Heart right ventricle (tissue), 16 donors: ENCODE measurements at regions of chr11 and their contacts with region 1.

Region 1: GRCh38 chr11:17116121-17116520 is 38.7 kb upstream of the RPS13 start:
- DNase-seq: no peak
- ATAC-seq: no peak
- H3K4me3 ChIP-seq: no peak overlapping the region
- H3K27ac ChIP-seq: no peak overlapping the region
- H3K4me1 ChIP-seq: no peaks in the 10 kb centered on the region
- H3K27me3 ChIP-seq: no peaks in the 10 kb centered on the region
- CTCF ChIP-seq: no peak

Region 2: GRCh38 chr11:17171916-17172315 is 55.8 kb after region 1 on chr11:
- intact Hi-C with region 1: loop called in 1 of 10 experiments (anchors 10 kb)
- DNase-seq: no peak
- ATAC-seq: peak in 1 of 8 donors; percentile 53
- H3K4me3 ChIP-seq: no peak overlapping the region
- H3K27ac ChIP-seq: no peak overlapping the region
- H3K4me1 ChIP-seq: peaks cover 0 to 22% (median 5%) of the 10 kb centered on the region in 9 donors
- H3K27me3 ChIP-seq: no peaks in the 10 kb centered on the region
- CTCF ChIP-seq: no peak

Region 3: DNA sequence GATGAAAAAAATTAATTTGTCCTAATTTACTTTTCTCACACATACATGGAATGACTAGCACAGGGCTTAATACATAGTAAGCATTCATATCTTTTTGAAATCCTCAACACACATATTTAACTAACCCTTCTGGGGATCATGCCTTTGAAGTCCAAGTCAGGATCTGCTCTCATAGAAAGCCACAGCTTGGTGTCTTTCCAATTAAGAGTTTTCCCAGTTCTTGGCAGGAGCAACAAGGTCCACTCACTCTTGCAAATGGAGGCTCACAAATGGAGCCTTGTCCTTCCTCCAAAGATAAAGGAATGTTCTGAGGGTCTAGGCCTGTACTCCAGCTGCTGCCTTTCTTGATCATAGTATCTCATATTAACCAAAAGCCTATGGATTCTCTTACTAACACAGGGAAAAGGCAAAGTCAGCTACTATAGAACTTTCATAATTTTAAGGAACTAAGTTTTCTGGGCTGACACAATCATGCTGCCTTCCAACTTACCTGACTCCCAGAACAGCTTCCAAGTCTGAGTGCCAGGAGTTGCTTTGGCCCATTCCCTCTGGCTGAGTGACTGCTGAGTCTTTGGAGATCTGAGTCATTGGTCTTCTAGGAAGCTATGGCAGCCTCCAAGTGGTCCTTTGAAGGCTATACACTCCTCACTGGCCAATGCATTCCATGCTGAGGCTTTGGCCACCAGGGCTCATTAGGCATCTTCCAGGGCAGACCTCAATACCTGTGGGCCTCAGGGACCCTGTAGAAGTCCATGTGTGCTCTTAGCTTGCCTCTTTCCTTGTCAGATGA is 134.6 kb after region 1 on chr11:
- intact Hi-C with region 1: no loop called
- DNase-seq: no peak
- ATAC-seq: no peak
- H3K4me3 ChIP-seq: no peak overlapping the region
- H3K27ac ChIP-seq: no peak overlapping the region
- H3K4me1 ChIP-seq: no peaks in the 10 kb centered on the region
- H3K27me3 ChIP-seq: no peaks in the 10 kb centered on the region
- CTCF ChIP-seq: no peak